ENCODE measurements at regions of chr11 and their contacts with region 1.

Region 1: DNA sequence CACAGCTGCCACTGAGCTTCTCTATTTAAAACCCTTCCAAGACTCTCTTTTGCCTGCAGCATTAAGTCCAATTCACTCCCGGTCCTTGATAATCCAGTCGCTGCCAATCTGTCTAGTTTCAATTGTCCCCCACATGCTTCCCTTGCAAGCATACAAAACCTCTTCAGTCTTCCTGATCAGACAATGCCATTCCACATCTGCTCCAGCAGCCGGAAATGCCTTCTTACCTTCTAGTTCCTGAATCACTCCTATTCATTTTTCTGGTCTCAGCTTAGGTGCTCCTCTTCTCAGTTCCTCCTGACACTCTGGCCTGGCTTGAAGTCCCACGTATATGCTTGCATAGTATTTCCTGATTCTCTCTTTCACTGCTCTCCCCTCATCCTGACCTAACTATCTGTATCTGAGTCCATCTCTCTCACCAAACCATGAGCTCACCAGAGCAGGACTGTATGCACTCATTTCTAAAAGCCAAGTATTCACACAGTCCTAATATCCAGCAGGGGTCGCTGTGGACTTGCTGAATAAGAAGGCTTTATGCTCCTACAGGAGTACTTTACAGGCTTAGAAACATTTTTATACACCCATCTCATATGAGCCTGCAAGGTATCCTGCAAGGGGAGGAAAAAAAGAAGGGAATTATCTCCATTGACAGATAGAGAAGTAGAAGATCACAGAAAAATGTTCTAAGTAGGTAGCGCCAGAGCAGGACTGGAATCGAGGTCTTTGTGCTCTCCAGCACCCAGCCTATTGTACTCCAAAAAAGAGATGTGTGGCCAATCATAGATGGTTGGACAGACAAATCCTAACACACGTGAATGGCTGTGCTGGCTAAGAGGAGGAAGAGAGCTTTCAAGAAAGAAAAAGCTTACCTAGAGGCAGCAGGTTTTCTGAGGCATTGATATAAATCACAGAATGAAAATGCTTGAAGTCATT is 19.2 kb downstream of the XRRA1 start:
- DNase-seq: peak; percentile 49
- ATAC-seq: peak; percentile 100
- H3K4me3 ChIP-seq: no peak overlapping the region
- H3K27ac ChIP-seq: no peak overlapping the region
- H3K4me1 ChIP-seq: no peaks in the 10 kb centered on the region
- H3K27me3 ChIP-seq: no peaks in the 10 kb centered on the region
- CTCF ChIP-seq: peak; percentile 75 to 95 (median 90)
- EP300 ChIP-seq: no peak
- POLR2A ChIP-seq: no peak
- RAD21 ChIP-seq: peak; percentile 95

Region 2: GRCh38 chr11:74826901-74827300 is 102.8 kb before region 1 on chr11:
- CTCF ChIA-PET with region 1: no interaction called
- POLR2A ChIA-PET with region 1: no interaction called
- RAD21 ChIA-PET with region 1: no interaction called
- SMC1A ChIA-PET with region 1: no interaction called
- in situ Hi-C with region 1: no loop called
- intact Hi-C with region 1: no loop called
- DNase-seq: no peak
- ATAC-seq: no peak
- H3K4me3 ChIP-seq: no peak overlapping the region
- H3K27ac ChIP-seq: no peak overlapping the region
- H3K4me1 ChIP-seq: no peaks in the 10 kb centered on the region
- H3K27me3 ChIP-seq: no peaks in the 10 kb centered on the region
- CTCF ChIP-seq: no peak
- EP300 ChIP-seq: no peak
- POLR2A ChIP-seq: no peak
- RAD21 ChIP-seq: no peak

Region 3: GRCh38 chr11:74909385-74909784 is 20.3 kb before region 1 on chr11:
- CTCF ChIA-PET with region 1: interaction called, 13 read pairs
- POLR2A ChIA-PET with region 1: no interaction called
- RAD21 ChIA-PET with region 1: interaction called, 5 read pairs
- SMC1A ChIA-PET with region 1: interaction called, 10 read pairs
- in situ Hi-C with region 1: no loop called
- intact Hi-C with region 1: no loop called
- DNase-seq: no peak
- ATAC-seq: no peak; the same call in 2 of the 3 replicates
- H3K4me3 ChIP-seq: peak overlapping the region; percentile 25; the same call in 1 of the 2 replicates
- H3K27ac ChIP-seq: no peak overlapping the region
- H3K4me1 ChIP-seq: peaks cover 10% of the 10 kb centered on the region
- H3K27me3 ChIP-seq: no peaks in the 10 kb centered on the region
- CTCF ChIP-seq: no peak
- EP300 ChIP-seq: no peak
- POLR2A ChIP-seq: no peak
- RAD21 ChIP-seq: no peak

Region 4: DNA sequence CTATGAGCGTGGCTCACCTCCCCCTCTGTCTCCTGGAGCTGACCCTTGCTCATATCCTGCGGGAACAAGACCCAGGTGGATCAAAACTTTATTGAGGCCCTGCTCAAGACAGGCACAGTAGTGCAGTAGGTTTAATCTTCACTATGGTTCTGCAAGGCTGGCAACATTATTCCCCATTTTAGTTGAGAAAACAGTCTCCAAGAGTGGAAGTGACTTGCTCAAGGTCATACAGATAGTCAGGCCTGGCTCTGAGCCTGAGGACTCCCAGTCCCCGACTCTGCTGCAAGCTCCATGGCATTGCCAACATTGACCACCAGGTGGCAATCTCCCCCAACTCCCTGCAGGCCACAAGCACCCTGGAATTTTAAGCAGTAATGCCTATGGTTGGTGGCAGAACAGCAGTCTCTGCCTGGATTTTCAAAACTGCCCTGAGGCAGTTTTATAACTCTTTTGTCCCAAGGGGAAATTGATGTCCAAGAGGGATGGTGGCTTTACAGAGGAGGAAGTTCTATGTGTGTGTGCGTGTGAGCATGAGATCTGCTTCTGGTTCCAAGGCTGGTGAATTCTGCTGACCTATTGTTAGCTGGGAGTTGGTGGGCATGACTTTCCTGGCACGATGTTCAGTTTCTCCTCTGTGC is 93.2 kb after region 1 on chr11:
- CTCF ChIA-PET with region 1: interaction called, 44 read pairs
- POLR2A ChIA-PET with region 1: no interaction called
- RAD21 ChIA-PET with region 1: interaction called, 30 read pairs
- SMC1A ChIA-PET with region 1: interaction called, 19 read pairs
- in situ Hi-C with region 1: loop called (anchors 5 kb)
- intact Hi-C with region 1: loop called (anchors 2 kb)
- DNase-seq: peak; percentile 45
- ATAC-seq: peak; percentile 100
- H3K4me3 ChIP-seq: no peak overlapping the region
- H3K27ac ChIP-seq: no peak overlapping the region
- H3K4me1 ChIP-seq: no peaks in the 10 kb centered on the region
- H3K27me3 ChIP-seq: no peaks in the 10 kb centered on the region
- CTCF ChIP-seq: peak; percentile 94 to 98 (median 96); a peak in 5 of 6 replicates
- EP300 ChIP-seq: no peak
- POLR2A ChIP-seq: no peak
- RAD21 ChIP-seq: peak; percentile 95

Region 5: GRCh38 chr11:75069473-75069872 is 139.8 kb after region 1 on chr11:
- CTCF ChIA-PET with region 1: interaction called, 10 read pairs
- POLR2A ChIA-PET with region 1: no interaction called
- RAD21 ChIA-PET with region 1: interaction called, 3 read pairs
- SMC1A ChIA-PET with region 1: no interaction called
- in situ Hi-C with region 1: no loop called
- intact Hi-C with region 1: no loop called
- DNase-seq: peak; percentile 21
- ATAC-seq: peak; percentile 91
- H3K4me3 ChIP-seq: no peak overlapping the region
- H3K27ac ChIP-seq: no peak overlapping the region
- H3K4me1 ChIP-seq: peaks cover 8% of the 10 kb centered on the region
- H3K27me3 ChIP-seq: no peaks in the 10 kb centered on the region
- CTCF ChIP-seq: no peak
- EP300 ChIP-seq: no peak
- POLR2A ChIP-seq: no peak
- RAD21 ChIP-seq: no peak

Region 6: DNA sequence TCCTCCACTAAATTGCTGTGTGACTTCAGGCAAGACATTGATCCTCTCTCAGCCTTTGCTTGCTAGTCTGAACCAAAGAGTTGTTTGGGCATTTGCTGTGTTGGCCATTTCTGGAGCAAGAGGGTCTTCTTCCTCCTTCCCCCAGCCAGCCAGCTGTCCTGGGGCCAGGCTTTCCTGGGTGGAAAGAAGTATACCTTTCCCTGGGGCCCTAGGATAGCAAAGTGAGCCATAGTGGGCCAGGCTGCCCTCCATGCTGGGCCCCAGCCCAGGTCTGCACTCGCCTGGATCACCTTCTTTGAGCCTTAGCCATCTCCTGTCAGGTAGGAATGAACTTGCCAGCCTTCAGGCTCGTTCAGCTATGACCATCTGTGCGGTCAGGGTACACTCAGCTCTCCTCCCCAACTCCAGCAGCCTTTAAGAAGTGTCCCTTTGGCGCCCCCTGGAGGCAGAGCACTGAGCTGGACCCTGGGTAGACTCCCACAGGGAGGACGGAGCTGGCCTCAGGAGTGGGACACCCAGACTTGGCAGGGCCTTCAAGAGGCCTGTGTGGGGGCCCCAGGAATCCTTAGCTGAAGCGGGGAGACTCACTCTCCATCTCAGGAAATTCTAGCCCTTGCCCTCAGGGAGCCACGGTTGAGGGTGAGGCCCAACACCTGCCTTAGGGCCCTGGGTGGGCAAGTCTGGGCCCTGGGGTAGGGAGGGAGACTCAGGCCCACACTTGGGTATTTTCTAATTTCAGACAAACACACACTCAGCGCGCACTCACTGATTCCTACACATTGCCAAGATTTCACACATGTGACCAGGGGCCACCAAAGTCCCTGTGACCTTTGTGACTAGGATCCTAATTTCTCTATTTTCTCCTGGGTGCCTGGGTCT is 275.2 kb after region 1 on chr11:
- CTCF ChIA-PET with region 1: interaction called, 35 read pairs
- POLR2A ChIA-PET with region 1: no interaction called
- RAD21 ChIA-PET with region 1: interaction called, 31 read pairs
- SMC1A ChIA-PET with region 1: interaction called, 17 read pairs
- in situ Hi-C with region 1: no loop called
- intact Hi-C with region 1: loop called (anchors 1 kb)
- DNase-seq: peak; percentile 8
- ATAC-seq: peak; percentile 100
- H3K4me3 ChIP-seq: no peak overlapping the region
- H3K27ac ChIP-seq: no peak overlapping the region
- H3K4me1 ChIP-seq: no peaks in the 10 kb centered on the region
- H3K27me3 ChIP-seq: peaks cover 0 to 4% of the 10 kb centered on the region in 2 experiments; a peak in 1 of 4 replicates
- CTCF ChIP-seq: peak; percentile 87 to 94 (median 89)
- EP300 ChIP-seq: no peak
- POLR2A ChIP-seq: no peak
- RAD21 ChIP-seq: peak; percentile 84

Measured in GM12878 (cell line).